ENCODE measurements at regions of chr17 and their contacts with region 1.

Region 1: DNA sequence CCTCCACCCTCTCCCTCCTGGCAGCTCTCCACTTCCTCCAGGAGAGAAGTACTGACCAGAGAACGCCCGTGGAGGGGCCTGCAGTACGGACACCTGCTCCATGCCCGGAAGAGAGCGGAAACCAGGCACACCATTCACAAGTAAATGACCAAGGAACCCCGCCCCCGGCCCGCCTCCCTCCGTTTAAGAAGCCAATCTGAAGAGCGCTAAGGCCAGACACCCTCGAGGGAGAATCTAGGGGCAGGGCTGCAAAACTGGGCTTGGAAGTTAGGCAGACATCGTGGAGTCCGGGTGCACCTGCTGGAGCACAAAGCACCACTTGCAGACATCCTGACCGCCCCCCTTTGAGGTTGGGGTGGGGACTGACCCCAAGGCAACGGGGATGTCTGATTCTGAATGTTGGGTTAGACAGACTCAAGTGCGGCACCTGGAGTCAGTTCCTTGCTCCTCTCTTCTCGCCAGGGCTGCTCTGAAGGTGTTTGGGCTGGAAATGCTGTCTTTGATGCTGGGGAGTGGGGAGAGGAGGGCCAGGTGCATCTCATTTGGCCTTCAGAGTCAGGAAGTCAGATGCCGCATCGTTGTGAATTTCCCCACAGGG is 964 bp upstream of the FAAP100 start:
- DNase-seq: peak; percentile 65 to 78 (median 71)
- ATAC-seq: peak; percentile 14 to 62 (median 44)
- H3K4me3 ChIP-seq: peak overlapping the region; percentile 82 to 100 (median 92)
- H3K27ac ChIP-seq: peak overlapping the region; percentile 77 to 95 (median 90)
- H3K4me1 ChIP-seq: peaks cover 0 to 65% (median 39%) of the 10 kb centered on the region in 12 donors
- H3K27me3 ChIP-seq: no peaks in the 10 kb centered on the region
- CTCF ChIP-seq: peak in 1 of 12 donors; percentile 11
- POLR2A ChIP-seq: no peak

Region 2: GRCh38 chr17:81428948-81429774 is 124.0 kb before region 1 on chr17:
- intact Hi-C with region 1: no loop called
- DNase-seq: peak; percentile 75 to 88 (median 84)
- ATAC-seq: peak; percentile 69 to 85 (median 75)
- H3K4me3 ChIP-seq: peak overlapping the region in 8 of 12 donors; percentile 1 to 32 (median 8)
- H3K27ac ChIP-seq: peak overlapping the region in 2 of 12 donors; percentile 13 to 15
- H3K4me1 ChIP-seq: peaks cover 16 to 59% (median 46%) of the 10 kb centered on the region in 12 donors
- H3K27me3 ChIP-seq: peaks cover 0 to 26% (median 0%) of the 10 kb centered on the region in 9 donors
- CTCF ChIP-seq: no peak
- POLR2A ChIP-seq: no peak

Region 3: GRCh38 chr17:81522491-81523474 is 30.3 kb before region 1 on chr17:
- intact Hi-C with region 1: loop called in 5 of 10 experiments (anchors 2 to 5 kb)
- DNase-seq: peak in 2 of 5 donors; percentile 22 to 46
- ATAC-seq: no peak
- H3K4me3 ChIP-seq: no peak overlapping the region
- H3K27ac ChIP-seq: no peak overlapping the region
- H3K4me1 ChIP-seq: peaks cover 2 to 39% (median 22%) of the 10 kb centered on the region in 12 donors
- H3K27me3 ChIP-seq: peaks cover 4 to 44% (median 13%) of the 10 kb centered on the region in 9 donors
- CTCF ChIP-seq: peak in 2 of 12 donors; percentile 6 to 14
- POLR2A ChIP-seq: no peak

Region 4: DNA sequence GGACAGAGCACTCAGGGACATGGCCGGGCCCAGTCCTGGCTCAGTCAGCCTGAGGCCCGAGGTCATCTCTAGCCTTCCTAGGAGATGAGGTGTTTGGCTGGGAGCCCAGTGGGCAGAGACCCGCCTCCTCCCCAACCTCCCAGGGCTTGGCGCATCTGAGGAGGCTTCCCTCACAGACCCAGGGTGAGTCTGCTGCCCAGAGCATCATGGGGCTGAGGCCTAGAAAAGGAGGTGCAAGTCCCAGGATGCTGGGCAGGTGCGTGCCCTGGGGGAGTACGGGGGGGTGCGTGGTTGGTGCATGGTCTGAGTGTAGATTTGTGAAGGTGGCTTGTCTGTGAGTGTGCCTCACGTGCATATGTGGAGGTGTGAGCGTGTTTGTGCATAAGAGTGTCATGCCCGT is 98.6 kb after region 1 on chr17:
- intact Hi-C with region 1: no loop called
- DNase-seq: no peak
- ATAC-seq: no peak
- H3K4me3 ChIP-seq: no peak overlapping the region
- H3K27ac ChIP-seq: no peak overlapping the region
- H3K4me1 ChIP-seq: peaks cover 0 to 9% (median 0%) of the 10 kb centered on the region in 12 donors
- H3K27me3 ChIP-seq: peaks cover 8 to 69% (median 25%) of the 10 kb centered on the region in 9 donors
- CTCF ChIP-seq: no peak
- POLR2A ChIP-seq: no peak

Measured in heart left ventricle (tissue), 16 donors.